Activated CD4-positive, alpha-beta T cell treated with anti-CD3 and anti-CD28 coated beads for 36 hours (primary cell): ENCODE measurements at regions of chr12 and their contacts with region 1.

Region 1: DNA sequence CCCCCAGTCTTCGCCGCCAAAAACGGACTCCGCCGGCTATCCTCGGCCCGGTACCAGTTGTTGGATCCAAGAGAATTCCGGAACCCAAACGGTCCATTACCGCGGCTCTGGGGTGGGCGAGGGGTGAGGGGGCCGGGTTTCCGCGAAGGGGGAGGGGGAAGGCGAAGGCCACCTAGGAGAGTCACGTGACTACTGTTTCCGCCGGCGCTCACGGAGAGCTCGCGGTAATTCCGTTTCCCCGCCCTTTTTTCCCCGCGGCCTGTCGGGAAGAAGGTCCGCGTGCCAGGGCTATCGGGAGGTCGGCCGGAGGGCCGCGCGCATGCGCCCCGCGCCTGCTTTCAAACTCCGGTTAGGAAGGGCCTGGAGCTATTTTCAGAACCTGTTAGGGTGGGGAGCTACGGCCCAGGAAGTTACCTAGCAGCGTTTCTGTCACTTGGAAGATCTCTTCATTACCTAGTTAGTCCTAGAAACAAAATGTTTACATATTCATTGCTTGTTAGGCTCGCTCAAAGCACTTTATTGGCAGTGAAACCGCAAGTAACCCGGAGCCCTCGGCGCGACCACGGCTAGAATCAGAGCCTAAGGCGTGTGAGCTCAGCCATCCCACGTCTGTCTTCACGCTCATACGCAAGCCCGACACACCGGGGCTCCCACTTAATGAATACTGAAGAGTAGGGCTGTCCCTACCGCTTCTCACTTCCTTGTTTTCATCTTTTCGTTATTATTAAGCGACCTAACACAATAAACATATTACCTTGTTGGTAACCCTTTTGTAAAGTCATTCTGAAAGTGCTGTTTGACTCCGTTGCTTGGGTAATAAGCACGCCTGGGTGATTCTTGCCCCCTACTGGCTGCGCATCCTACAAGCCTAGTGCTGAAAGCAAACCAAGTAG is 624 bp upstream of the SBNO1 start:
- DNase-seq: peak; percentile 98
- ATAC-seq: peak; percentile 82
- H3K4me3 Mint-ChIP-seq: peak overlapping the region; percentile 86
- H3K27ac Mint-ChIP-seq: peak overlapping the region; percentile 98
- H3K4me1 Mint-ChIP-seq: peaks cover 19% of the 10 kb centered on the region
- H3K27me3 Mint-ChIP-seq: no peaks in the 10 kb centered on the region

Region 2: GRCh38 chr12:122382919-122383350 is 982.3 kb before region 1 on chr12:
- CTCF ChIA-PET with region 1: no interaction called
- POLR2A ChIA-PET with region 1: no interaction called
- intact Hi-C with region 1: no loop called
- DNase-seq: no peak
- ATAC-seq: no peak
- H3K4me3 Mint-ChIP-seq: no peak overlapping the region
- H3K27ac Mint-ChIP-seq: no peak overlapping the region
- H3K4me1 Mint-ChIP-seq: peaks cover 4% of the 10 kb centered on the region
- H3K27me3 Mint-ChIP-seq: no peaks in the 10 kb centered on the region

Region 3: GRCh38 chr12:122895705-122896636 is 469.3 kb before region 1 on chr12 and contains the start of gene VPS37B:
- CTCF ChIA-PET with region 1: no interaction called
- POLR2A ChIA-PET with region 1: no interaction called
- intact Hi-C with region 1: loop called in 1 of 2 experiments (anchors 5 kb)
- DNase-seq: peak; percentile 93
- ATAC-seq: peak; percentile 67
- H3K4me3 Mint-ChIP-seq: peak within 1 kb of the TSS; percentile 86
- H3K27ac Mint-ChIP-seq: peak within 1 kb of the TSS; percentile 87
- H3K4me1 Mint-ChIP-seq: peaks cover 87% of the 10 kb centered on the region
- H3K27me3 Mint-ChIP-seq: peaks cover 7% of the 10 kb centered on the region
- total RNA-seq, gene VPS37B: 9.4 to 11.4 TPM

Region 4: DNA sequence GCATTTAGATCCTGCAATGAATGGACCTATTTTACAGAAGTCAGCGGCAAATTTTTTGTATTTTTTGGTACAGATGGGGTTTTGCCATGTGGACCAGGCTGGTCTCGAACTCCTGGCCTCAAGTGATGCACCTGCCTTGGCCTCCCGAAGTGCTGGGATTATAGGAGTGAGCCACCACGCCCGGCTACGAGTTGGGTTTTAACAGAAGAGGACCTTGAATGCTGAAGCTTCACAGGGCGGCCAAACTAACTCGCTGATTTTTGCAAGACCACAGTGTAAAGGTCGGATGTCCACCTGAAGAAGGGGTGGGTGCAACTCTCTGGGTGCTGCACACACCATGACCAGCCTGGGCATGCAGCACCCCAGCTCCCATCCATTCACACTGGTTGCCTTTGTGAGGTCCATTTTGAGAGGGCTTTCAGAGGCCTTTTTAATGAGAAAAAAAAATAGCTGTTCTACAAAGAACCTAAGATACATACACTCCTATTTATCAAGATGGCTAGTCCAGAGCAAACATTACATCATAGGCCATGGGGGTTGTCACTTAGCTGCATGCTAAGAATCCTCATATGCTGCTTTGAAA is 72.0 kb before region 1 on chr12:
- CTCF ChIA-PET with region 1: no interaction called
- POLR2A ChIA-PET with region 1: interaction called, 11 read pairs
- intact Hi-C with region 1: no loop called
- DNase-seq: no peak
- ATAC-seq: no peak
- H3K4me3 Mint-ChIP-seq: no peak overlapping the region
- H3K27ac Mint-ChIP-seq: no peak overlapping the region
- H3K4me1 Mint-ChIP-seq: no peaks in the 10 kb centered on the region
- H3K27me3 Mint-ChIP-seq: no peaks in the 10 kb centered on the region

Region 5: DNA sequence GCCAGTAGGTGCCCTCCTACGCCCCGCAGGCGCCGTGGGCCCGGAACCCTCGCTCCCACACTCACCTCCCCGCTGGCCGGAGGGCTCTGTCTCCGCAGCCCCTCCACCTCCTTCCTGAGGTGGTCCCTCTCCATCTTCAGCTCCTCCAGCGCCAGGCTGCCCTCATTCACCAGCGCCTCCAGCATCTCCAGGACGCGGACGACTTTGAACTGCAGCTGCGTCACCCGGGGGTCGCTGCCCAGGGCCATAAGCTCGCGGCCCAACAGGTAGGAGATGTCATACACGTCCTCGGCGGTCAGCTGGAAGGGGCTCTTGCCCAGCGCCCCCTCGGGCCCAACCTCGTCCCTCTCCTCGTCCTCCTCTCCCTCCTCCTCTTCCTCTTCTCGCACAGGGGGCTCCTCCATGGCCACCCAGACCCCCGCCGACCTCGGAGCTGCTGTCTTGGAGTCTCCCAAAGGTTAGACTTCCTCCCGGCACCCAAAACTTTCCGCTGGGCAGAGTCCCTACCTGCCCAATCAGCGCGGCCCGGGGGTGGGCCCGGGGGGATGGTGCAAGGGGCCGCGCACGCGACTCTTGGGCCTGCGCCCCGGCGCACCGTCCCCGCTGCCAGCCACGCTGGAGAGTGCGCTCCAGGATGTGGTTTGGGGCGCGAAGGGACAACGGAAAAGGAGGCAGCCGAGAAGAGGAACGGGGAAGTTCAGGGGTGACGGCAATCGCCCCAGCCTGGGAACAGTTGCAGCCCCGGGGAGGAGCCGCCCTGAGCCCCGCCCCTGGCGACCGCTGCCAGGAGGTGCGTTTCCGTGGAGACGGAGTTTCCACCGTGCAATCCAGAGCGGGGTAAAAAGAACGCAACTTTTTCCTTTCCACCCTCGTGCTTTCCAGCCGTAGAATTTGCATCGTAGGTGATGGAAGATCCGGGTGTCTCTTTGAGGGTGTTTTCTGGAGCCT is 71.0 kb after region 1 on chr12 and contains the start of gene RILPL2:
- CTCF ChIA-PET with region 1: interaction called, 4 read pairs
- POLR2A ChIA-PET with region 1: interaction called, 3 read pairs
- intact Hi-C with region 1: loop called (anchors 1 kb)
- DNase-seq: peak; percentile 96
- ATAC-seq: peak; percentile 85
- H3K4me3 Mint-ChIP-seq: peak within 1 kb of the TSS; percentile 95
- H3K27ac Mint-ChIP-seq: peak within 1 kb of the TSS; percentile 98
- H3K4me1 Mint-ChIP-seq: peaks cover 33% of the 10 kb centered on the region
- H3K27me3 Mint-ChIP-seq: no peaks in the 10 kb centered on the region
- total RNA-seq, gene RILPL2: 10.4 to 12.1 TPM

Region 6: GRCh38 chr12:123580772-123581171 is 215.5 kb after region 1 on chr12:
- CTCF ChIA-PET with region 1: interaction called, 4 read pairs
- POLR2A ChIA-PET with region 1: interaction called, 5 read pairs
- intact Hi-C with region 1: loop called (anchors 1 kb)
- DNase-seq: no peak
- ATAC-seq: no peak
- H3K4me3 Mint-ChIP-seq: no peak overlapping the region
- H3K27ac Mint-ChIP-seq: no peak overlapping the region
- H3K4me1 Mint-ChIP-seq: peaks cover 18% of the 10 kb centered on the region
- H3K27me3 Mint-ChIP-seq: no peaks in the 10 kb centered on the region

Region 7: DNA sequence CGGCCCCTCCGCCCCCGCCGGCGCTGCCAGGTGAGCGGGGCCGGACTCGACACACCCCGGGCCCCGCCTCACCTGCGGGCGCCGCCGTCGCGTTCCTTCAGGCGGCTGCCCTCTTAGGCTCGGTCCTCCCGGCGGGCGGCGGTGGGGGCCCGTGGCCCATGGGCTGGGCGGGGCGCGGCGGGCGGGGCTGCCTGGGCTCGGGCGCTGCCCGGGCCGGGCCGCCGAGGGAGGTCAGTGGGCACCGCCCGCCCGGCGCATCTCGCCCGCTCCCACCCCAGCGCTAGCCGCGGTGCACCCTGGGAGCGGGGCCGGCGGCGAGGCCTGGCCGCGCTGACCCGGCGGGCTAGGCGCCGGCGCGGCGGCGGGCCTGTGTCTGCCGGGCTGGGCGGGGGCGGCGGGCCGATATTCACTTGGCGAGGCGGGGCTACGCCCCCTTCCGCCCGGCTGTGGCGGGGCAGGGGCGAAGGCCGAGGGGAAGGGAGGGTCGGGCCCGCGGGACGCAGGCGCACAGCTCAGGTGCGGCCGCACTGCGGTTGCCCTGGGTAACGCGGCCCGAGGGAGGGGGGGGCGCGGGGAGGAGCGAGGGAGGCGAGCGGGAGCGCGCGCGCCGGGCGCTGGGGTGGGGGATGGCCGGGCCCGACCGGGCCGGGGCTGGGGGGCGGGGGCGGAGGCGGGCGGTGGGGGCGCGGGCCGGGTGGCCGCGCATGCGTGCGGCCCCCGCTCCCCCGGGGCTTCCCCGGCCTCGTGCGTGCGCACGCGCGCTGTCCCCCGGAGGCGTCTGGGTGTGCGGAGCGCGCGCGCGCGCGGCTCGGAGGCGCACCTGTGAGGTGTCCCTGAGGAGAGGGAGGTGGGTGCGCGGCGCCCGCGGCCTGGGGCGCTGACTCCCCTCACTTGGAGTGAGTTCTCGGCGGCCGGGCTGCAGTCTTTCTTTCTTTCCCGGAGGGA is 607.5 kb after region 1 on chr12 and contains the starts of genes CCDC92 and ZNF664:
- CTCF ChIA-PET with region 1: no interaction called
- POLR2A ChIA-PET with region 1: no interaction called
- intact Hi-C with region 1: loop called in 1 of 2 experiments (anchors 1 kb)
- DNase-seq: peak; percentile 98
- ATAC-seq: peak; percentile 87
- H3K4me3 Mint-ChIP-seq: peak within 1 kb of the TSS; percentile 87
- H3K27ac Mint-ChIP-seq: peak within 1 kb of the TSS; percentile 89
- H3K4me1 Mint-ChIP-seq: peaks cover 48% of the 10 kb centered on the region
- H3K27me3 Mint-ChIP-seq: no peaks in the 10 kb centered on the region
- total RNA-seq, gene CCDC92: 8.7 to 11.0 TPM
- total RNA-seq, gene ZNF664: 46.4 to 48.3 TPM